Endothelial cell of umbilical vein (primary cell): ENCODE measurements at regions of chr11 and their contacts with region 1.

Region 1: GRCh38 chr11:6315811-6316425 is 4.4 kb downstream of the CAVIN3 start:
- DNase-seq: peak; percentile 51
- H3K4me3 ChIP-seq: no peak overlapping the region
- H3K27ac ChIP-seq: no peak overlapping the region
- H3K4me1 ChIP-seq: peaks cover 18% of the 10 kb centered on the region
- H3K27me3 ChIP-seq: no peaks in the 10 kb centered on the region
- CTCF ChIP-seq: peak; percentile 86 to 88
- POLR2A ChIP-seq: no peak

Region 2: DNA sequence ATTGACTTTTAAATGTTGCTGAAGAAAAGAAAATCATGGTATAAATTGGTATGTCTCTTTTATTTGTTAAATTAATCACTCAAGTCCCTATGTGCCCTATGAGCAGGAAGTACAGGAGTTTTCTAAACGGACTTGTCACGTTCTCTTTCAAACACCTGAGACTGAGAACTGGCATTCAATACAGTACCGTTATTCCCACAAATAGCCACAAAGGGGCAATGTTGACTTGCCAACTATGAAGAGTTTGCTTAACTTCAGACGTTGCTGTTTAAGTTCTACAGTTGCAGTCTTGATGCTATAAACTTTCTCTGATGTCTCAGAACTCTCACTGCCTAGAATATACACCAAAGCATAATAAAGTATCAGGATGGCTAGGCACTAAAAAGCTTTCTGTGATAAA is 293.0 kb before region 1 on chr11:
- CTCF ChIA-PET with region 1: interaction called, 14 read pairs
- POLR2A ChIA-PET with region 1: no interaction called
- dilution Hi-C with region 1: no loop called
- intact Hi-C with region 1: loop called (anchors 1 kb)
- DNase-seq: peak; percentile 70
- H3K4me3 ChIP-seq: no peak overlapping the region
- H3K27ac ChIP-seq: no peak overlapping the region
- H3K4me1 ChIP-seq: no peaks in the 10 kb centered on the region
- H3K27me3 ChIP-seq: peaks cover 5 to 9% of the 10 kb centered on the region in 2 experiments
- CTCF ChIP-seq: peak; percentile 36 to 46
- POLR2A ChIP-seq: no peak

Region 3: DNA sequence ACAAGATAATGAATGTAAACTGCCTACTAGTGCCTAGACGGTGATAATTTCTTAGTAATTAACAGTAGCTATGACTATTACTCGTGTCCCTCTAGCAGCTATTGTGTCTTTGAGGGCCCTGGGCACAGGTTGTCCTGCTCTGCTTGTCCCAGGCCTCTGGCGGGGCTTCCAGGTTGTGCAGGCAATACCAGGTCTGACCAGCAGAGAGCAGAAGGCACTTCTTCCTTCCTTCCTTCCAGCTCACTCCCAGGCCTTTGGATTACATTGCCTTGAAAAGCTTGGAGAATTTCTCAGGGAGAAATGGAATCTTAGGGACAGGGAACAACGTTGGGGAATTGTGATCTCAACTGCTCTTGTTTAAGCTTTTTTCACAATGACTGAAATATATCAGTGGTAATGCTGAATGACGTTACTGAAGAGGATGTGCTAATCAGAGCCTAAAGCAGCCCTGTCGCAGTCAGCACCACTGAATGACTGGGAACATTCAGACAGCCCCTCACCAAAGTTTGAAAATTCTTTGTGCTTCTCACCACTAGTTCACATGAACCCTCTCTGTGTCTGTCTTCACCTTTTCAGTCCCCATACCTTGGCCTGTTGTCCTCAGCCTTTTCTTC is 64.7 kb before region 1 on chr11:
- CTCF ChIA-PET with region 1: interaction called, 14 read pairs
- POLR2A ChIA-PET with region 1: no interaction called
- dilution Hi-C with region 1: no loop called
- intact Hi-C with region 1: loop called (anchors 1 kb)
- DNase-seq: peak; percentile 47
- H3K4me3 ChIP-seq: no peak overlapping the region
- H3K27ac ChIP-seq: no peak overlapping the region
- H3K4me1 ChIP-seq: peaks cover 5% of the 10 kb centered on the region
- H3K27me3 ChIP-seq: peaks cover 19 to 28% of the 10 kb centered on the region in 2 experiments
- CTCF ChIP-seq: peak; percentile 76 to 78
- POLR2A ChIP-seq: no peak

Region 4: DNA sequence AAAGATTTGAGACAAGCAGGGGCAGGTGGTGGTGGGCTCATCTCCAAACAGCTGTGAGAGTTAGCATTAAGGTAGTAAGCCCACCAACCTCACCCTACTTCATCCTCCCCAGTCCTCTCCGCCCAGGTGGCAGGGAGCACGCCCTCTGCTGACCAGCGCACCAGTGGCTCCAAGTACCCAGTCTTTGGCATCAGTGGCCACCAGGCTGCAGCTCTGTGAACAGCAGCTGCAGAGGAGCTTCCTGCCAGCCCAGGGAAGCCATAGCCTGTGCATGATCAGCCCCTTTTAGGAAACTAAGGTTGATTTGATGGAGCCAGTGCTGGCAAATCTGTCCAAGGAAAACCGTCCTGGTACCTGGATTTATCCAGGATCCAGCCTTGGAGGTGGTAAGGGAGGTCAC is 17.3 kb before region 1 on chr11:
- CTCF ChIA-PET with region 1: interaction called, 14 read pairs
- POLR2A ChIA-PET with region 1: no interaction called
- dilution Hi-C with region 1: no loop called
- intact Hi-C with region 1: loop called (anchors 1 kb)
- DNase-seq: peak; percentile 32
- H3K4me3 ChIP-seq: no peak overlapping the region
- H3K27ac ChIP-seq: no peak overlapping the region
- H3K4me1 ChIP-seq: no peaks in the 10 kb centered on the region
- H3K27me3 ChIP-seq: peaks cover 0 to 2% of the 10 kb centered on the region in 2 experiments
- CTCF ChIP-seq: peak; percentile 58 to 83
- POLR2A ChIP-seq: no peak

Region 5: GRCh38 chr11:6353367-6353987 is 37.6 kb after region 1 on chr11:
- CTCF ChIA-PET with region 1: interaction called, 31 read pairs
- POLR2A ChIA-PET with region 1: no interaction called
- dilution Hi-C with region 1: no loop called
- intact Hi-C with region 1: loop called (anchors 1 kb)
- DNase-seq: peak; percentile 51
- H3K4me3 ChIP-seq: no peak overlapping the region
- H3K27ac ChIP-seq: no peak overlapping the region
- H3K4me1 ChIP-seq: peaks cover 9% of the 10 kb centered on the region
- H3K27me3 ChIP-seq: peaks cover 4 to 8% of the 10 kb centered on the region in 2 experiments
- CTCF ChIP-seq: peak; percentile 84 to 95
- POLR2A ChIP-seq: no peak

Region 6: DNA sequence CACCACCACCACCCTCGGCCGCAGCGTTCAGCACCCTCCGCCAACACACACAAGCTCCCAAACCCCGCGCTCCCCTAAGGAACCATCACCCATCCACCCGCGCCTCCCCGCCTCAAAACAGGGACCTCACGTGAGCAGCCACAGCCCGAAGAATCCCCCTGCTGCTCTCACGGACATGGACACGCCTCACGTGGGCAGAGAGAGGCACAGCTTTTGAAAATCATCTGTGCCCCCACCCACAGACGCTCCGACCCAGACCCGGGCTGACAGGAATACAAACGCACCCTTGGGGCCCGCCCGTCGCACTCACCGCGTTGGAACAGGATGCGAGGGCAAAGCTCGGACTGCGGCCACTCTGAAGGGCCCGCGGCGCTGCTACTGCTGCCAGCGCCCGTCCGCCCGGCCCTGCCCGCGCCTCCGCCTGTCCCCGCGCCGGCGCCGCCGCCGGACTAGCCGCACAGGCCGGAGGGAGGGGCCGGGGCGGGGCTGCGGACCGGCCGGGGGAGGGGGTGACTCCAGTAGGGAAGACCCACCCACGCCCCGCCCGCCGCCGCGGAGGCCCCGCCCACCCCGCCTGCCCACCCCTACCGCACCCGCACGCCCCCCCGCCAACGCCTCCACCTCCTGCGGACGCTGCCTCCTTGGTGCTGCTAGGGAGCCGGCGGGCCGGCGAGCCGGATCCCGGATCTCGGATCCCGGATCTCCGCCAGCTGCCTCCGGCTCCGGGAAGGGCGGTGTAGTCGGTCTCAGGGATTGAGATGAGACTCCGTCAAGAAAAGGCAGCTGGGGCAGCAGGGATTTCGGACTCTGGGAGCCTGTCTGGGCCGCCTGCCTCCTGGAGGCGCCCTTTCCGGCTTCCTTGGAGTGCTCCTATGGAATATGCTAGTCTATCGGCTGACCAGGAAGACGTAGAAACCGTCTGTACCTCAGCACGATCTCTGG is 157.8 kb after region 1 on chr11 and contains the start of gene TRIM3:
- CTCF ChIA-PET with region 1: no interaction called
- POLR2A ChIA-PET with region 1: no interaction called
- dilution Hi-C with region 1: no loop called
- intact Hi-C with region 1: loop called (anchors 5 kb)
- DNase-seq: peak; percentile 87
- H3K4me3 ChIP-seq: peak within 1 kb of the TSS; percentile 61 to 87 (median 68)
- H3K27ac ChIP-seq: peak within 1 kb of the TSS; percentile 87
- H3K4me1 ChIP-seq: peaks cover 21% of the 10 kb centered on the region
- H3K27me3 ChIP-seq: no peaks in the 10 kb centered on the region
- CTCF ChIP-seq: peak in 1 of 2 donors; percentile 42
- POLR2A ChIP-seq: peak; percentile 95
- total RNA-seq, gene TRIM3: 25.6 and 29.2 TPM in 2 replicates

Region 7: GRCh38 chr11:7600205-7600775 is 1284.4 kb after region 1 on chr11:
- CTCF ChIA-PET with region 1: no interaction called
- POLR2A ChIA-PET with region 1: no interaction called
- dilution Hi-C with region 1: no loop called
- intact Hi-C with region 1: loop called (anchors 10 kb)
- DNase-seq: peak; percentile 92
- H3K4me3 ChIP-seq: no peak overlapping the region
- H3K27ac ChIP-seq: peak overlapping the region; percentile 52
- H3K4me1 ChIP-seq: peaks cover 36% of the 10 kb centered on the region
- H3K27me3 ChIP-seq: no peaks in the 10 kb centered on the region
- CTCF ChIP-seq: no peak
- POLR2A ChIP-seq: peak; percentile 79